PC-9 (cell line): ENCODE measurements at regions of chr6 and their contacts with region 1.

Region 1: GRCh38 chr6:157379656-157380454 is 1.1 kb upstream of the ZDHHC14 start:
- DNase-seq: peak; percentile 74 to 77
- H3K4me3 ChIP-seq: peak overlapping the region; percentile 77
- H3K27ac ChIP-seq: peak overlapping the region; percentile 34; the same call in 1 of the 2 replicates
- H3K4me1 ChIP-seq: peaks cover 20% of the 10 kb centered on the region
- H3K27me3 ChIP-seq: no peaks in the 10 kb centered on the region
- CTCF ChIP-seq: no peak

Region 2: GRCh38 chr6:157323255-157323965 is 56.4 kb before region 1 on chr6 and contains the start of gene TMEM242:
- CTCF ChIA-PET with region 1: interaction called, 3 read pairs
- POLR2A ChIA-PET with region 1: interaction called, 5 read pairs
- intact Hi-C with region 1: loop called (anchors 1 kb)
- DNase-seq: peak; percentile 81 to 90
- H3K4me3 ChIP-seq: peak within 1 kb of the TSS; percentile 97
- H3K27ac ChIP-seq: peak within 1 kb of the TSS; percentile 64
- H3K4me1 ChIP-seq: peaks cover 23% of the 10 kb centered on the region
- H3K27me3 ChIP-seq: no peaks in the 10 kb centered on the region
- CTCF ChIP-seq: peak; percentile 51; the same call in 1 of the 2 replicates
- total RNA-seq, gene TMEM242: 8.1 and 8.7 TPM in 2 replicates

Region 3: GRCh38 chr6:157335829-157336228 is 44.0 kb before region 1 on chr6:
- CTCF ChIA-PET with region 1: no interaction called
- POLR2A ChIA-PET with region 1: no interaction called
- intact Hi-C with region 1: no loop called
- DNase-seq: no peak
- H3K4me3 ChIP-seq: no peak overlapping the region
- H3K27ac ChIP-seq: no peak overlapping the region
- H3K4me1 ChIP-seq: peaks cover 8% of the 10 kb centered on the region; the same call in 1 of the 2 replicates
- H3K27me3 ChIP-seq: no peaks in the 10 kb centered on the region
- CTCF ChIP-seq: no peak

Region 4: DNA sequence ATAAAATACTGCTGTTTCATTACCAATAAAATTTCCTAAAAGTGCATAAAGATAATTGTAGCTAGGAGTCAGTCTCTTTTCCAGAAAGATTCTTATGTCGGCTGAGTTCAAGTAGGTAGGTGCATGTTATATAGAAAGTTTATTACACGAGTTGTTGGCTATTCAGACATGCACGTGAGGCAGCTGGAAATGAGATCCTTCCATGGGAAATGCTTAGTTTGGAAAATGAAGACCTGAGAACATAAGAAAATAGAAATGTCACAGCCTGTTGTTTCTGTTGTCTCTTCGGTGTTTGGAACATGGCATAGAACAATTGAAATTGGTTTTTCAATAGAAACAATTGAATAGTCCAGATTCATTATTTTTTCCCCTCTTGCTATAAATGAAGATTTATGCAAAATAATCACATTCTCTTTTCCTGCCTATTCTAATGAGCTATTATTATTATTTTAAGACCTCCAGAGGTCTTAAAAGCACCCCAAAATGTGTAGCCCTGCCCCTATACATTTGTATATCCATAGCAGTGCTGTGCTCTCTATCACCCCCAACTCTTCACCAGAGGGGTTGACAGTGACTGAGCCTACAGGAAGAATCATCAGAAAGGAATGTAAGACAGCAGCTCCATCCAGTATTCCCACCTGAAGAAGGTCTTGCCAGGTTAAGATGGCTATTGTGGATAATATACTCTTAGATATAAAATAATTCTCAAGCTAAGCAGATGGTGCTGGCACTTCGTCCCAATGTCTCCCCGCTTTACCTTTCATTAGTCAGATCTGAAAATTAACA is 83.3 kb after region 1 on chr6:
- CTCF ChIA-PET with region 1: interaction called, 15 read pairs
- POLR2A ChIA-PET with region 1: no interaction called
- intact Hi-C with region 1: no loop called
- DNase-seq: peak; percentile 14 to 79
- H3K4me3 ChIP-seq: no peak overlapping the region
- H3K27ac ChIP-seq: peak overlapping the region; percentile 20; the same call in 1 of the 2 replicates
- H3K4me1 ChIP-seq: peaks cover 25% of the 10 kb centered on the region
- H3K27me3 ChIP-seq: no peaks in the 10 kb centered on the region
- CTCF ChIP-seq: no peak; the same call in 1 of the 2 replicates

Region 5: GRCh38 chr6:157571269-157571668 is 191.4 kb after region 1 on chr6:
- CTCF ChIA-PET with region 1: no interaction called
- POLR2A ChIA-PET with region 1: no interaction called
- intact Hi-C with region 1: no loop called
- DNase-seq: no peak
- H3K4me3 ChIP-seq: no peak overlapping the region
- H3K27ac ChIP-seq: no peak overlapping the region
- H3K4me1 ChIP-seq: no peaks in the 10 kb centered on the region
- H3K27me3 ChIP-seq: no peaks in the 10 kb centered on the region
- CTCF ChIP-seq: no peak

Region 6: GRCh38 chr6:157597446-157598312 is 217.8 kb after region 1 on chr6:
- CTCF ChIA-PET with region 1: no interaction called
- POLR2A ChIA-PET with region 1: no interaction called
- intact Hi-C with region 1: loop called (anchors 1 kb)
- DNase-seq: peak; percentile 42 to 70
- H3K4me3 ChIP-seq: no peak overlapping the region
- H3K27ac ChIP-seq: no peak overlapping the region
- H3K4me1 ChIP-seq: peaks cover 16% of the 10 kb centered on the region
- H3K27me3 ChIP-seq: no peaks in the 10 kb centered on the region
- CTCF ChIP-seq: peak; percentile 73

Region 7: GRCh38 chr6:157604816-157605215 is 225.0 kb after region 1 on chr6:
- CTCF ChIA-PET with region 1: no interaction called
- POLR2A ChIA-PET with region 1: interaction called, 13 read pairs
- intact Hi-C with region 1: no loop called
- DNase-seq: no peak
- H3K4me3 ChIP-seq: no peak overlapping the region
- H3K27ac ChIP-seq: no peak overlapping the region
- H3K4me1 ChIP-seq: no peaks in the 10 kb centered on the region
- H3K27me3 ChIP-seq: no peaks in the 10 kb centered on the region
- CTCF ChIP-seq: no peak